Endothelial cell of umbilical vein (primary cell): ENCODE measurements at regions of chr2 and their contacts with region 1.

Region 1: GRCh38 chr2:68238955-68239822 is 13.1 kb downstream of the PPP3R1 start:
- DNase-seq: peak; percentile 44
- H3K4me3 ChIP-seq: peak overlapping the region in 1 of 3 experiments; percentile 25
- H3K27ac ChIP-seq: peak overlapping the region; percentile 40
- H3K4me1 ChIP-seq: peaks cover 40% of the 10 kb centered on the region
- H3K27me3 ChIP-seq: no peaks in the 10 kb centered on the region
- CTCF ChIP-seq: no peak
- POLR2A ChIP-seq: no peak

Region 2: GRCh38 chr2:67798541-67799160 is 440.5 kb before region 1 on chr2:
- CTCF ChIA-PET with region 1: no interaction called
- POLR2A ChIA-PET with region 1: no interaction called
- dilution Hi-C with region 1: no loop called
- intact Hi-C with region 1: no loop called
- DNase-seq: peak; percentile 52
- H3K4me3 ChIP-seq: no peak overlapping the region
- H3K27ac ChIP-seq: no peak overlapping the region
- H3K4me1 ChIP-seq: peaks cover 17% of the 10 kb centered on the region
- H3K27me3 ChIP-seq: no peaks in the 10 kb centered on the region
- CTCF ChIP-seq: no peak
- POLR2A ChIP-seq: no peak

Region 3: DNA sequence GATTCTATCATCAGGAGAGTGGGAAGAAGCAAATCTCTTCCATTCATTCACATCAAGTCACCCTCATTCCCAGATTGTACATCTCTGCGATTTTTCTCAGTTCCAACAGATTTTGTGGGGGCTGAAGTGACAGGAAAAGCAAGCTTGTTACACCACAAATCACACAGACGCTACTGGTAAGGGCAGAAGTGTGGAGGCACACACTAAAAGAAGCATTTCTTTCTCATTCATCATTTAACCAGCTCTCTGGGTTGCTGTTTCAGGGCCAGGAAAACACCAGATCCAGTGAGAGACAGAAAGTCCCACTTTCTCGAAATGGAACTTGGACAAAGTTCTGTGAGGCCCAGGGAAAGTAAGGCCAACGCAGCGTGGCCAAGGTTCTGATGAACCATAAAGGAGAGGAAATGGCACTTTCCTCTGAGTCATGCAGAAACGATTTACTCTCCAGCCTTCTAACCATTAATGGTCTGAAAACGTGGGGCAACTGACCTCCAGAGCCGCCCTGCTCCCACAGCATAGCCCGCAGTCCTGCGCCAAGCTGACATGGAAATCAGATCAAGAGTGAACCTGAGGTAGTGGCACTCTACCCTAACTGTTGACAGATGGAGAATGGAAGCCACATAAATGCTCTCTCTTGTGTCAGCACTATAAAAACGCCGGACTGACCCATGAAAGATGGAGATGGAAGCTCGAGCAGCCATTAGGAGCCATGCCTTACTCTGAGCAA is 367.3 kb before region 1 on chr2:
- CTCF ChIA-PET with region 1: no interaction called
- POLR2A ChIA-PET with region 1: no interaction called
- dilution Hi-C with region 1: no loop called
- intact Hi-C with region 1: no loop called
- DNase-seq: peak; percentile 84
- H3K4me3 ChIP-seq: peak overlapping the region in 1 of 3 experiments; percentile 37
- H3K27ac ChIP-seq: peak overlapping the region; percentile 100
- H3K4me1 ChIP-seq: peaks cover 38% of the 10 kb centered on the region
- H3K27me3 ChIP-seq: no peaks in the 10 kb centered on the region
- CTCF ChIP-seq: no peak
- POLR2A ChIP-seq: no peak

Region 4: GRCh38 chr2:68225119-68225632 is 14.0 kb before region 1 on chr2:
- CTCF ChIA-PET with region 1: interaction called, 15 read pairs
- POLR2A ChIA-PET with region 1: no interaction called
- dilution Hi-C with region 1: no loop called
- intact Hi-C with region 1: no loop called
- DNase-seq: peak; percentile 34
- H3K4me3 ChIP-seq: no peak overlapping the region
- H3K27ac ChIP-seq: no peak overlapping the region
- H3K4me1 ChIP-seq: peaks cover 3% of the 10 kb centered on the region
- H3K27me3 ChIP-seq: no peaks in the 10 kb centered on the region
- CTCF ChIP-seq: peak in 1 of 2 donors; percentile 11
- POLR2A ChIP-seq: no peak